Activated CD4-positive, alpha-beta memory T cell treated with anti-CD3 and anti-CD28 coated beads, Interleukin-2, amount 10 ng/mL, durations not matched to agents 7 days and 5 days (primary cell): ENCODE measurements at regions of chr21 and their contacts with region 1.

Region 1: DNA sequence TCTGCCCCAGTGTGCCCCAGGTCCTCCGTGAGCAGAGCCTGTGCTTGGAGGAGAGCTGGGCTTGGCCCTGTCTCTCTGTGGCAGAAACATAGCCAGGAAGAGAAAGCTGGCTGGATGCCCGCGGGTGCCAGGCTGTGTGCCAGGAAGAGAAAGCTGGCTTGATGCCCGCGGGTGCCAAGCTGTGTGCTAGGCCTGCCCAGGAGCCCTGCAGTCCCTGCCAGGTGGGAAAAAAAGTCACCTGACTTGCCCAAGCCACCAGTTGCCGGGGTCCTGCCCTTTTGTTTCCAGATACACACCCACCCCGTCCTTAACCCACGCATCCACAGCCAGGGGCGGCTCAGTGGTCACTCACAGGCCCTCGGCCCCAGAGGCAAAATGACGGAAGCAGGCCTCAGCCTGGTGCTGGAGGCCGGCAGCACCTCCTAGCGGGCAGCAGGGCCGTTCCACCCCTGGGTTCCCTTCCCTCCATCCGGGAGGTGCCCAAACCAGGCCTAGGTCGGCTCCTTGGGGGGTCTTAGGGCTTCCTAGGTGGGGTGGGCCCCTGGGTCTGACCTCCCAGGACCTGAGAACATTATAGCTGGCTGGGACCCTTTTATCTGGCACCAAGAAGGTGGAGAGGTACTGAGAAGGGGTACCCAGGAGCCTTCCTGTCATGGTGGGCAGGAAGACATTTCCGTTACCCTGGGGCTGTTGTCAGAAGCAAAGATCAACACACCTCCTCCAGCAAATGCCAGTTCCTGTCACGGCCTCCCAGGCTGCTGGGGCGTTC is 9.1 kb downstream of the ITGB2 start:
- DNase-seq: peak; percentile 79
- H3K4me3 Mint-ChIP-seq: peak overlapping the region; percentile 74
- H3K27ac Mint-ChIP-seq: peak overlapping the region; percentile 89
- H3K4me1 Mint-ChIP-seq: peaks cover 70% of the 10 kb centered on the region
- H3K27me3 Mint-ChIP-seq: no peaks in the 10 kb centered on the region

Region 2: DNA sequence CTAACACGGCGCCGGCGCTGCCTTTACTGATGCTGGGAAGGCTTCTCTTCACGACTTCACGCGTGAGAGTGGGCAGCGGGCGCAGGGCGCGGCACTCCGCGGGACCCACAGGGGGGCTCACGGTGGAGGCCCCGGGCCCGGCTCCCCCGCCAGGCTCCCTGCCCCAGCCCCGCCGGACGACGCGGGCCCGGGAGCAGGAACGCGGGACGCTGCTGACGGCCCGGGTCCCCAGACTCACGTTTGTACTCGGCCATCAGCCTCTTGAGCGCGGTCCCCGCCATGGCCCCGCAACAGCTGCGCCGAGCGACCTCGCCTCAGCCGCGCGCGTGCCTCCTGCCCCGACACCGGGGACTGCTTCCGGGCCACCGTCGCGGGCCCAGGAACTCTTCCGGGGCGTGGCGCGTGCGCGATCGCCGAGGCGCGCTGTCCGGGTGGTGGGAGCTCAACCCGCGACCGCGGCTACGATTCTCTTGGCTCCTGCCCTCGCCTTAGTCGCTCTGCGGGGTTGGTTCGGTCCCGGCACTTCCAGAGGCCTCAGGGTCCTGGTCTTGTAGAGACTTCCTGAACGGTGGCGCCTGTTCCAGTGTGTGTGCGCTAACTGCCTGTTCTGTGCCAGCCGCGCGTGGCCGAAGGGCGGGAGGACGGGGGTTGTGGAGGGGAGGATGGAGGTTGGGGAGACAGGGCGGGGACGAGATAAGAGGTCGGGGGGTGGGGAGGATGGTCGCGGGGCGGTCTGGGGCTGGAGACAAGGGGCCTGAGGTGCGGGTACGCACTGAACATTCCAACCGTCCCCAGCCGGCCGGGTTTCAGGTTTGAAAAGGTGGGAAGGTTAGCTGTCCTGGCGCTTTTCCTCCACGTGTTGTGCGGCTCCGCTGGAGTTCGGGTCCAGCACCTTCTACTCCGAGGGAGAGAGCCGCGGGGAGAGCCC is 109.8 kb before region 1 on chr21 and contains the start of gene UBE2G2:
- CTCF ChIA-PET with region 1: interaction called, 15 read pairs
- POLR2A ChIA-PET with region 1: interaction called, 15 read pairs
- DNase-seq: peak; percentile 87
- H3K4me3 Mint-ChIP-seq: peak within 1 kb of the TSS; percentile 88
- H3K27ac Mint-ChIP-seq: peak within 1 kb of the TSS; percentile 80
- H3K4me1 Mint-ChIP-seq: peaks cover 43% of the 10 kb centered on the region
- H3K27me3 Mint-ChIP-seq: no peaks in the 10 kb centered on the region
- total RNA-seq, gene UBE2G2: 70.7 to 74.0 TPM

Region 3: GRCh38 chr21:44880762-44881585 is 30.6 kb before region 1 on chr21:
- CTCF ChIA-PET with region 1: interaction called, 11 read pairs
- POLR2A ChIA-PET with region 1: interaction called, 4 read pairs
- DNase-seq: no peak
- H3K4me3 Mint-ChIP-seq: no peak overlapping the region
- H3K27ac Mint-ChIP-seq: peak overlapping the region; percentile 69
- H3K4me1 Mint-ChIP-seq: peaks cover 30% of the 10 kb centered on the region
- H3K27me3 Mint-ChIP-seq: no peaks in the 10 kb centered on the region

Region 4: DNA sequence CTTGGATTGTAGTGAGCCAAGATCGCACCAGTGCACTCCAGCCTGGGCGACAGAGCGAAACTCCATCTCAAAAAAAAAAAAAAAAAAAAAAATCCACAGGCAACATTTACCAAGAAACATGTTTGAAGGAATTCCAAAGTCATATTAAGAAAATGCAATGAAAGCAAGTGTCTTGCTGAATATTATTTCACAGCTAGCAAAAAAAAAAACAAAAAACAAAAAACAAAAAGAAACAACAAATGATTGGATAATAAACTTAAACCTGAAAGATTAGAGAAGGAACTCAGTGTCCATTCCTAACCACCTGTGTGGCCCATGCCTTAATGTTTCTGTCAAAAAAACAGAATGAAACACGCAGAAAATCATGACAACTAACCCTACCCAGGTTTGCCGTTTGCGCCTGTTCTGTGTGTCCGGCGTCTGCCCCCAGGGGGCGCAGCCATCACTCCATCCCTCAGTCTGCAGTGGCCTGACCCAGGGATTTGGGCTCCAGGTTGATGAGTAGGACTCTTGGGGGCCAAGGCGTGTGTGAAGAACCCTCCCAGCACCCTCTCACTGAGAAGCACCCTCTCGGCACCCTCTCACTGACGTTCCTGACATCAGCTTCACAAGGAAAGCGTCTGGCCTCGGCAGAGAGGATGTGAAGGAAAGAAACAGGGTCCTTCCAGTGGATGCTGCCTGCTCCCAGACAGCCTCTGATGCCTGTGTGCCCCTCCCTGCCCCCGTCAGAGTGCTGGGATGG is 18.9 kb before region 1 on chr21:
- CTCF ChIA-PET with region 1: interaction called, 16 read pairs
- POLR2A ChIA-PET with region 1: interaction called, 38 read pairs
- DNase-seq: peak; percentile 81
- H3K4me3 Mint-ChIP-seq: no peak overlapping the region
- H3K27ac Mint-ChIP-seq: peak overlapping the region; percentile 44
- H3K4me1 Mint-ChIP-seq: peaks cover 12% of the 10 kb centered on the region
- H3K27me3 Mint-ChIP-seq: no peaks in the 10 kb centered on the region